ENCODE measurements at regions of chr10 and their contacts with region 1.

Region 1: DNA sequence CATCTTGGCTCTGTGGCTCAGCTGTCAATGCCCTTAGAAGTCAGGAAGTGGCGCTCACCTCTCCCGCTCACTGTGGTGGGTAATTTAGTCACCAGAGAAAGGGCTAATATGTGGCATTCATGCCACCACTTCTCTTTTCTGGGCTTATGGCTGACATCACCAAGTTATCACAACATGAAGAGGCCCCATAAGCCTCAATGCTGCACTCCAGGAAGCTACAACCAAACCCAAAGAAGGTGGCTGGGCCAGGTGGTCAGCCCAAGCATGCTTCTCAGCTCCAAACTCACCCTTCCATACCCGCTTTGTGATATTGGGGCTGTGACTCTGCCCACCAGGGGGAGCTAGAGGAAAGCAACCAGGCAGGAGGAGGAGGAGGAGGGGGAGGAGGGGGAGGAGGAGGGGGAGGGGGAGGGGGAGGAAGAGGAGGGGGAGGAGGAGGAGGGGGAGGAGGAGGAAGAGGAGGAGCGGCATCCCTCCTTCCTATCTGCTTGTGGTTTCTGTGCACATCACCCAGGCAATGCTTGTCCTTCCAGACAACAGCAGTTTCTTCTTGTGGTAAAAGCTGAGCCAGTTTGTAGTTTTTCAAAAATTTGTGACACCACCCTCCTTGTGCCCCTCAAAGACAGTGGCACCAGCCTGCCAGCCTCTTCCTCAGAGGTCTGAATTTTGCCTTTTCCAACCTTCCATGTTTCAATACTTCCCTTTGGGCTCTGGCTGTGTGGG is 42.1 kb downstream of the CYP26A1 start:
- H3K4me3 ChIP-seq: no peak overlapping the region
- H3K27ac ChIP-seq: no peak overlapping the region
- H3K4me1 ChIP-seq: no peaks in the 10 kb centered on the region
- CTCF ChIP-seq: no peak

Region 2: GRCh38 chr10:93103953-93104352 is 11.9 kb before region 1 on chr10:
- CTCF ChIA-PET with region 1: interaction called, 11 read pairs
- POLR2A ChIA-PET with region 1: no interaction called
- H3K4me3 ChIP-seq: no peak overlapping the region
- H3K27ac ChIP-seq: no peak overlapping the region
- H3K4me1 ChIP-seq: no peaks in the 10 kb centered on the region
- CTCF ChIP-seq: no peak

Region 3: GRCh38 chr10:93126484-93127052 is 10.7 kb after region 1 on chr10:
- CTCF ChIA-PET with region 1: interaction called, 18 read pairs
- POLR2A ChIA-PET with region 1: no interaction called
- H3K4me3 ChIP-seq: no peak overlapping the region
- H3K27ac ChIP-seq: no peak overlapping the region
- H3K4me1 ChIP-seq: no peaks in the 10 kb centered on the region
- CTCF ChIP-seq: no peak

Region 4: DNA sequence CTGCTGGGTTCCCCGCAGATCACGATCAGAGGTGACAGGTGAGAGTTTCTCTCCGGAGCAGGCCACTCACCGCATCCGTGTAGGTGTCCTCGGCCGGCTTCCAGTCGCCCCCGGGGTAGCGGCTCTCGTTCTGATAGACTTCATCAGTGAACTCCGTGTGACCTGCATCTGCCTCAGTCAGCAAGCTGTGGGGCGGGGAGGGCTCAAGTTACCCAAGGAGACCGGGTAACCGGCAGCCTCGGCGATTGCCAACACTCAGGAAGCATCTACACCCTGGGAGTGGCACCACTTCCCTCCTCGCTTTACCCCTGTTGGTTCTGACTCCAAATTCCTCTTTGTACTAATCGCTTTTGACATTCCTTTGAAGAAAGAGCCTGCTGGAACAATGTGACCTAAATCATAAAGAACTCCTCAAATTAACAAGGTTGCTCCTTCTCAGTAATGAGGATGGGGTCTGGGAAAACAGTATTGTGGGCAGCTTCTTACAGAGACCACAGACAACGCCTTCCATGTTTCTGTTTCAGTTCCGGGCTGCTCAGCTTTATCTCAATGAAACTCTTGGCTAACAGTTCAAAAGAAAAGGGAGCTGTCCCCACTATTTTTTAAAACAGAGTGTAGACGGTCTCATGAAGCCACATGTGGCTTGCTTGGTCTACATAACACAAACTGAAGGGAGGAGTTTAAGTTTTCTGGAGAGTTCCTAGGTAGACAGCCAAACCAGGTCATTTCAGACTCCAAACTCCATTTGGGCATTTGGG is 248.2 kb after region 1 on chr10:
- CTCF ChIA-PET with region 1: no interaction called
- POLR2A ChIA-PET with region 1: no interaction called
- H3K4me3 ChIP-seq: no peak overlapping the region
- H3K27ac ChIP-seq: no peak overlapping the region
- H3K4me1 ChIP-seq: no peaks in the 10 kb centered on the region
- CTCF ChIP-seq: no peak